ENCODE measurements at regions of chr7 and their contacts with region 1.

Region 1: GRCh38 chr7:102425639-102426267 is 7.6 kb upstream of the ORAI2 start:
- DNase-seq: peak; percentile 88
- H3K4me3 Mint-ChIP-seq: peak overlapping the region; percentile 78
- H3K27ac Mint-ChIP-seq: peak overlapping the region; percentile 98
- H3K4me1 Mint-ChIP-seq: peaks cover 68% of the 10 kb centered on the region
- H3K27me3 Mint-ChIP-seq: no peaks in the 10 kb centered on the region

Region 2: GRCh38 chr7:102396027-102397019 is 29.4 kb before region 1 on chr7 and contains the start of gene PRKRIP1:
- CTCF ChIA-PET with region 1: no interaction called
- POLR2A ChIA-PET with region 1: interaction called, 18 read pairs
- DNase-seq: peak; percentile 90
- H3K4me3 Mint-ChIP-seq: peak within 1 kb of the TSS; percentile 91
- H3K27ac Mint-ChIP-seq: peak within 1 kb of the TSS; percentile 77
- H3K4me1 Mint-ChIP-seq: peaks cover 22% of the 10 kb centered on the region
- H3K27me3 Mint-ChIP-seq: no peaks in the 10 kb centered on the region
- total RNA-seq, gene PRKRIP1: 27.2 to 28.3 TPM